Natural killer cell (primary cell): ENCODE measurements at regions of chr9 and their contacts with region 1.

Region 1: GRCh38 chr9:129487642-129488409 is 133.1 kb downstream of the C9orf50 start:
- DNase-seq: peak in 1 of 2 donors; percentile 76
- ATAC-seq: peak in 2 of 3 donors; percentile 4 to 35
- H3K4me3 ChIP-seq: peak overlapping the region; percentile 42
- H3K4me3 Mint-ChIP-seq: peak overlapping the region; percentile 82
- H3K27ac ChIP-seq: peak overlapping the region; percentile 80
- H3K27ac Mint-ChIP-seq: peak overlapping the region; percentile 85 to 92
- H3K4me1 ChIP-seq: peaks cover 53% of the 10 kb centered on the region
- H3K4me1 Mint-ChIP-seq: peaks cover 20 to 39% of the 10 kb centered on the region in 2 donors
- H3K27me3 ChIP-seq: peaks cover 10% of the 10 kb centered on the region
- H3K27me3 Mint-ChIP-seq: peaks cover 7 to 13% of the 10 kb centered on the region in 2 donors
- CTCF ChIP-seq: no peak

Region 2: DNA sequence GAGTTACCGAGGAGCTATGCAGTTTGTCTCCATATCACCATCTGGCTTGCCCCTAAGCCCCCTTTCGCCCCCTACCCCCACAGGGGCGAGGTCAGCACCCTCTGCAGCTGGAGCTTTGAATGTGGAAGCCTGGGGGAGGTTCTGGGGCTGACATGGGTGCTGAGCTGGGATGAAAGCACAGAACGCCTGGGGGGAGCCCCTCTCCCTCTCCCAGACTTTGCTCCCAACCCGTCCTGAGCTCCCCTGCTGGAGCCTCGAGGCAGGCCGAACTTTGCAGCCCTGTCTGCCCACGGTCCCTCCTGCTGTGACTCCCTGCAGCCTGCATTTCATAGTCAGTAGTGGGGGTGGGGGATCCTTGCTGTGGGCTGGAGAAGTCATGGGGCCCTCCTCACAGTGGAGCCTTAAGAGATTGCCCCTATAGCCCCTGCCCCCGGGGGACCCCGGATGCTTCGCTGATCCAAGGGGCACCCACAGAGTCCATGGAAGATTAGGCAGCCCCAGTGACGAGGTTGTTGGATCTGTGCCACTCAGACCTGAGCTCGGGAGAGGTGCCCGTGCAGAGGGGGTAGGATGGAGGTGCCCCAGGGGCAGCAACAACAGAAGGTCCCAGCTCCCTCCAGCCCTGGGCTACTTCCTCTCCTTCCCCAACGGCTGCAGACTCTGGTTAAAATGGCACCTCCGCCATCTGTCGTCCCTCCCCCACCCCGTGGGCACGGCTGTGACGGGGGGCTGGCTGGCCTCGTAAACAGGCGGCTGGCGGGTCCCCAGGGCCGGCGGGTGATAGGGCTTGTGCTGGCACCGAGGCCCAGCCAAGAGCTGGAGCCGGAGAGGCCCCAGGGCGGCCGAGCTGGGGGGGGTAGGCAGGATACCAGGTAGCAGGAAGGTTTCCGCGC is 28.9 kb before region 1 on chr9:
- intact Hi-C with region 1: loop called (anchors 2 kb)
- DNase-seq: peak; percentile 53 to 61
- ATAC-seq: peak; percentile 17 to 28 (median 19)
- H3K4me3 ChIP-seq: no peak overlapping the region
- H3K4me3 Mint-ChIP-seq: peak overlapping the region; percentile 65
- H3K27ac ChIP-seq: peak overlapping the region; percentile 90
- H3K27ac Mint-ChIP-seq: peak overlapping the region; percentile 88 to 96
- H3K4me1 ChIP-seq: peaks cover 61% of the 10 kb centered on the region
- H3K4me1 Mint-ChIP-seq: peaks cover 28 to 60% of the 10 kb centered on the region in 2 donors
- H3K27me3 ChIP-seq: no peaks in the 10 kb centered on the region
- H3K27me3 Mint-ChIP-seq: no peaks in the 10 kb centered on the region
- CTCF ChIP-seq: no peak

Region 3: GRCh38 chr9:129473523-129474229 is 14.2 kb before region 1 on chr9:
- intact Hi-C with region 1: no loop called
- DNase-seq: no peak
- ATAC-seq: no peak
- H3K4me3 ChIP-seq: no peak overlapping the region
- H3K4me3 Mint-ChIP-seq: no peak overlapping the region
- H3K27ac ChIP-seq: no peak overlapping the region
- H3K27ac Mint-ChIP-seq: no peak overlapping the region
- H3K4me1 ChIP-seq: no peaks in the 10 kb centered on the region
- H3K4me1 Mint-ChIP-seq: no peaks in the 10 kb centered on the region
- H3K27me3 ChIP-seq: no peaks in the 10 kb centered on the region
- H3K27me3 Mint-ChIP-seq: peaks cover 0 to 2% of the 10 kb centered on the region in 2 donors
- CTCF ChIP-seq: no peak

Region 4: DNA sequence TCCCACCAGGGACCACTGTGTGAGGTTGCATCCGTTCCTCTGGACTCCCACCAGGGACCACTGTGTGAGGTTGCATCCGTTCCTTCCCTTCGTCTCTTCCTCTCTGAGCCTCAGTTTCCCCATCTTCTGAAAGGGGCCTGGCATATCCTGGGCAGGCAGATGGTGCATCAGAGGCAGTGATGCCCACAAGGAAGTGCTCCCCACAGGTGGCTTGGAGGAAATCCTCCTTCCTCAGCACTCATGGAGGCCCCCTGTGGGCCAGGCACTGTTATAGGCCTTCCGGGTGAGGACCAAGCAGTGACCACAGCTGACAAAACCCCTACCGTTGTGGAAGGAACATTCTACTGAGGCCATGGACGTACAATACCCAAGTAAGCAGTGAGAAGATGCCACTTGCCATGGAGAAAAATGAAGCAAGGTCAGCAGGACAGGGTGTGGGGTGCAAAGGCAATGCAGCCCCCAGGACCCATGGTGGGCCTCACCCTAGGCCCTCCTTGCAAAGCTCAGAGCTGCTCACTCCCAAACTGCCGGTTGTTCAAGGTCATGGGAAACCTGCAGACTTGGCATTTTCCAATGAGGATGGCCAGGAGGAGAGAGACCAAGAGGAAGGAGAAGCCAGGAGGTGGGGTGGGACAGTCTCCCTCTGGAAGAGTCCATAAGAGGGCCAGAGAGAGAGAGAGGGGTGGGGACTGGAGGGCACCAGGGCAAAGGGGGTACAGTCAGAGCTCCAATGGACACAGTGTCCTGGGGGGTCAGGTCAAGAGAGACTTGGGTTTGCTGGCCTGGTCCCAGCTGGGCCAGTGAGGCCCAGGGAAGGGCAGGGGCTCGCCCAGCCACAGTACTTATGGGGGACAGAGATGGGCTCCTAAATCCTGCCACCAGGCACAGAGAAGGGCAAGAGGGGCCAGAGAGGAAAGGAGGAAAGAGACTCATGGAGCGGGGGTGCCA is 82.0 kb after region 1 on chr9:
- intact Hi-C with region 1: no loop called
- DNase-seq: peak in 1 of 2 donors; percentile 38
- ATAC-seq: peak; percentile 40 to 45 (median 43)
- H3K4me3 ChIP-seq: no peak overlapping the region
- H3K4me3 Mint-ChIP-seq: peak overlapping the region; percentile 81
- H3K27ac ChIP-seq: no peak overlapping the region
- H3K27ac Mint-ChIP-seq: no peak overlapping the region
- H3K4me1 ChIP-seq: peaks cover 27% of the 10 kb centered on the region
- H3K4me1 Mint-ChIP-seq: peaks cover 7 to 18% of the 10 kb centered on the region in 2 donors
- H3K27me3 ChIP-seq: peaks cover 23% of the 10 kb centered on the region
- H3K27me3 Mint-ChIP-seq: peaks cover 8 to 29% of the 10 kb centered on the region in 2 donors
- CTCF ChIP-seq: no peak